Naive thymus-derived CD4-positive, alpha-beta T cell (primary cell): ENCODE measurements at regions of chr7 and their contacts with region 1.

Region 1: DNA sequence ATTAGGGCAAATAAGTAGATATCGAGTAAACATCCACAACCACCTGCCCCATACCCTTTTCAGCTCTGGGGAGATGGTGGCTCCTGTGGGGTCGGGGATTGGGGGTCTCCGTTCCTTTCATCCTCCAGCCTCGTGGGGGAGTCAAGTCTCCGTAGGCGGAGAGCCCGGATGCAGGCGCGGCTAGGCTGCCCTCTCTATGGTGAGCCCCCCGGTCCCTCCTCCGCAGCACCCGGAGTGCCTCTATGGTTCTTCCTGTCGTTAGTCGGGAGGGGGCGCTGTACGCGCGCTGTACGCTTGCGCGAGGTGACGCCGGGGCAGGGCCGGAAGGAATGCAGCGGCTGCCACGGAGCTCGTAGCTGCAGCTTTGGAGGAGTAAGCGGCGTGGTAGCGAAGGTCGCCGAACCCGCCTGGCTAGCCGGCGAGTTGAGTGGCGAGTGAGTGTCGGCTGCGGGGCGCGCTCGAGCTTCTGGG is 14.8 kb upstream of the MMD2 start:
- DNase-seq: peak; percentile 89 to 99 (median 95)
- ATAC-seq: peak; percentile 99
- H3K4me3 ChIP-seq: peak overlapping the region; percentile 68
- H3K4me3 Mint-ChIP-seq: peak overlapping the region; percentile 85 to 100 (median 98)
- H3K27ac ChIP-seq: peak overlapping the region; percentile 78
- H3K27ac Mint-ChIP-seq: peak overlapping the region; percentile 90 to 99 (median 95)
- H3K4me1 ChIP-seq: peaks cover 4 to 9% of the 10 kb centered on the region in 2 donors
- H3K4me1 Mint-ChIP-seq: peaks cover 22 to 44% (median 33%) of the 10 kb centered on the region in 7 donors
- H3K27me3 ChIP-seq: no peaks in the 10 kb centered on the region
- H3K27me3 Mint-ChIP-seq: peaks cover 0 to 2% (median 0%) of the 10 kb centered on the region in 5 donors

Region 2: DNA sequence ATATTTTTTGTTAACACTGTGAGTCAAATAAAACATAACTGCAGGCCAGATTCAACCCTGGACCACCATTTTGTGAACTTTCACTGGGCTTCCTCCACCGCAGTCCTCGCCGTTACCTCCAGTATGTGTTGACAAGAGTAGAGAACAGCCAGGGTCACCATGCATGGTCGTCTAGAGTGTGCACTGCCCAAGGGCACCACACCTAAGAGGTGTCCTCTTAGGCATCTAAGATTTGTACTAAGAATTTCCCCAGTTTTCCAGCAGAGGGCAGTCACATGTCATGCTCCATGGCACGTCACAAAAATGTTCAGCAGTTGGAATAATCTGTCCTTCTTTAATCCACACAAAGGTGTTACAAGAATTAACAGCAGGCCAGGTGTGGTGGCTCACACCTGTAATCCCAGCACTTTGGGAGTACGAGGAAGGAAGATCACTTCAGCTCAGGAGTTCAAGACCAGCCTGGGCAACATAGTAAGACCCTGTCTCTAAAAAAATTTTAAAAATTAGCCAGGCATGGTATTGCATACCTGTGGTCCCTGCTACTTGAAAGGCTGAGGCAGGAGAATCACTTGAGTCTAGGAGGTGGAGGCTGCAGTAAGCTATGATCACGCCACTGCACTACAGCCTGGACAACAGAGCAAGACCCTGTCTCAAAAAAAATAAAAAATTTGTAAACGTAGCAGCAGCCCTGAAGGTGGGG is 362.8 kb before region 1 on chr7:
- CTCF ChIA-PET with region 1: interaction called, 3 read pairs
- POLR2A ChIA-PET with region 1: no interaction called
- intact Hi-C with region 1: loop called in 1 of 2 experiments (anchors 1 kb)
- DNase-seq: peak; percentile 23 to 77 (median 71)
- ATAC-seq: peak; percentile 91
- H3K4me3 ChIP-seq: no peak overlapping the region
- H3K4me3 Mint-ChIP-seq: no peak overlapping the region
- H3K27ac ChIP-seq: no peak overlapping the region
- H3K27ac Mint-ChIP-seq: peak overlapping the region in 3 of 9 donors; percentile 5 to 67 (median 26)
- H3K4me1 ChIP-seq: peaks cover 0 to 12% of the 10 kb centered on the region in 2 donors
- H3K4me1 Mint-ChIP-seq: peaks cover 11 to 28% (median 20%) of the 10 kb centered on the region in 7 donors
- H3K27me3 ChIP-seq: no peaks in the 10 kb centered on the region
- H3K27me3 Mint-ChIP-seq: peaks cover 0 to 3% (median 0%) of the 10 kb centered on the region in 5 donors

Region 3: DNA sequence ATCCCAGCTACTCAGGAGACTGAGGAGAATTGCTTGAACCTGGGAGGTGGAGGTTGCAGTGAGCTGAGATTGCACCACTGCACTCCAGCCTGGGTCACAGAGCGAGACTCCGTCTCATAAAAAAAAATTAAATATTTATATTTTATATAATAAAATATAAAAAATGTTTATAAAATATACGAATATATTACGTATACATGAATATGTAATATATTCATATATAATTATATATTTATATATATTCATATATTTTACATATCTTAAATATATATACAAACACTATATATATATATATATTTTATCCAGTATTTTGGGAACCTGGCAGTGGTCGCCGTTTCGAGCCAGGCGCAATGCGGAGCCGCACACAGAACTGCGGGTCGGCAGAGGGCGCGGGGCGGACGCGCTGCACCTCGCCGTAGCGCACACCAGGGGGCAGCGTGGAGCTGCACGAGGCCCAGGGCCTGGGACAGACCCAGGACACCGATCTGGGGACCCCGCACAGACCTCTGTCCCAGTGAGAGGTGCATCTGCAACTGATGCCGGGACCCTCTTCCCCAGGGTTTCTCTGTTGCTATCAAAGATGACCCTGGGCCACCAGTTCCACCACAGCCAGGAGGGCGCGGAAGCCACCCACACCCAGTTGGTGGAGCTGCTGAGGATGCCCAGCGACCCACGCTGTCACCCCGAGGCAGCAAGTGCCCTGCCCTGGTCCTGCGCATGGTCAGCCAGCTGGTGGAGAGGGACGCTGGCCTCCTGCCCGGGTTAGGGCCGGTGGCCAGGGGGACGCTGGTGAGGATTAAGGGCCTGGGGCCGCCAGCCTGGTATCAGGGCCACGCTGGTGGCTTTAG is 175.7 kb before region 1 on chr7:
- CTCF ChIA-PET with region 1: no interaction called
- POLR2A ChIA-PET with region 1: no interaction called
- intact Hi-C with region 1: loop called in 1 of 2 experiments (anchors 5 kb)
- DNase-seq: peak; percentile 34 to 77 (median 60)
- ATAC-seq: peak; percentile 91
- H3K4me3 ChIP-seq: no peak overlapping the region
- H3K4me3 Mint-ChIP-seq: no peak overlapping the region
- H3K27ac ChIP-seq: no peak overlapping the region
- H3K27ac Mint-ChIP-seq: no peak overlapping the region
- H3K4me1 ChIP-seq: no peaks in the 10 kb centered on the region
- H3K4me1 Mint-ChIP-seq: peaks cover 0 to 10% (median 6%) of the 10 kb centered on the region in 7 donors
- H3K27me3 ChIP-seq: no peaks in the 10 kb centered on the region
- H3K27me3 Mint-ChIP-seq: no peaks in the 10 kb centered on the region

Region 4: DNA sequence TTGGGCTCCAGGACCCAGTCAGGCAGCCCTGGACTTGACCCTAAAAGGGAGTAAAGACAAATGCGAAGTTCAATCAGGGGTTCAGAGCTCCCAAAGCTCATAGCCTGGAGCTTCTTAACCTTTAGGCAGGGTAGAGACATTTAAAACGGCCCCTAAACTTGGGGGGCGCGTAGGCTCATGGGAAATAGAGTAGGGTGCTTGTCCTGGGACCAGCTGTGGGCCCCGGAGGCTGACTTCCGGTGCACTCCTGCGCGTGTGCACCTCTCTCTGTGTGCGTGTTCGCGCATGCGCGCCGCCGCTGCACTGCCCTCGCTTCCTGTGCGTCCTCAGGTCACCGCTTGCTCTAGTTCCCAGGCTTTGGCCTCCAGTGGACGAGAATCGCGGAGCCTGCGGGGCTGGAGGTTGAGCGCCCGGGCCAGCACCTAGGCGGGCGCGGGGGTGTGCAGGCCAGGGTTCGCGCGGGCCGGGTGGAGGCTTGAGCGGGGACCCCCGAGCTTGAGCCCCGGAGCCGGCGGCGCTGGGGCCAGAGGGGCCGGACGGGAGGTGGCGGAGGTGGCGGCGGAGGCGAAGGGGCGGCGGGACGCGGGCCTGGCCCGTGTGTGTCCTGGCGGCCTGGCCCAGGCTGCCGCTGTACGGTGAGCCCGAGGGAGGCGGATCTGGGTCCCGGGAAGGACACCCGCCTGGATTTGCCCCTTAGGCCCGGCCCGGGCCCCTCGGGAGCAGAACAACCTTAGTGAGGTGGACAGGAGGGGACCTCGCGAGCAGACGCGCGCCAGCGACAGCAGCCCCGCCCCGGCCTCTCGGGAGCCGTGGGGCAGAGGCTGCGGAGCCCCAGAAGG is 72.0 kb after region 1 on chr7 and contains the start of gene RBAK:
- CTCF ChIA-PET with region 1: no interaction called
- POLR2A ChIA-PET with region 1: interaction called, 8 read pairs
- intact Hi-C with region 1: loop called (anchors 1 kb)
- DNase-seq: peak; percentile 74 to 91 (median 86)
- ATAC-seq: peak; percentile 100
- H3K4me3 ChIP-seq: peak within 1 kb of the TSS; percentile 76
- H3K4me3 Mint-ChIP-seq: peak within 1 kb of the TSS; percentile 92 to 98 (median 96)
- H3K27ac ChIP-seq: peak within 1 kb of the TSS; percentile 95
- H3K27ac Mint-ChIP-seq: peak within 1 kb of the TSS; percentile 82 to 97 (median 92)
- H3K4me1 ChIP-seq: peaks cover 4 to 7% of the 10 kb centered on the region in 2 donors
- H3K4me1 Mint-ChIP-seq: peaks cover 16 to 57% (median 51%) of the 10 kb centered on the region in 7 donors
- H3K27me3 ChIP-seq: no peaks in the 10 kb centered on the region
- H3K27me3 Mint-ChIP-seq: peaks cover 0 to 2% (median 0%) of the 10 kb centered on the region in 5 donors
- total RNA-seq, gene RBAK: 11.8 to 21.8 (median 17.5) TPM

Region 5: DNA sequence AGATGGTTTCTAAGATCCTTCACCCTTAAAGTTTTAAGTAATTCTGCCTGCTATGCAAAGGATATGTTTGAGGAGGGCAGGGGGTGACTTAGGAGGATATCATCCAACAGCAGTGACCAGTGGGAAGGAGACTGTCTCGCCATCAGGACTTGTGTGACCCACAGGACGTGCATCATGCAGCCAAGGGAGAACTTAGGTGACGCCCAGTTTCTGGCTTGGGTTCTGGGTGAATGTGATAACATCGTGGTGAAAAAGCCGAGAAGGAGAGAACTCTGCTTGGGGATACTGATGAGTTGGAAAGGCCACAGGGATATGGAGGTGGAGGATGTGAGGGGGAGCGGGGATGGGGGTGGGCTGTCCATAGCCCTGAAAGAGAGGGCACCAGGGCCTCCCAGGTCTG is 220.1 kb after region 1 on chr7:
- CTCF ChIA-PET with region 1: no interaction called
- POLR2A ChIA-PET with region 1: no interaction called
- intact Hi-C with region 1: loop called in 1 of 2 experiments (anchors 5 kb)
- DNase-seq: no peak
- ATAC-seq: no peak
- H3K4me3 ChIP-seq: no peak overlapping the region
- H3K4me3 Mint-ChIP-seq: peak overlapping the region in 1 of 10 donors; percentile 42
- H3K27ac ChIP-seq: no peak overlapping the region
- H3K27ac Mint-ChIP-seq: peak overlapping the region in 2 of 9 donors; percentile 14 to 37
- H3K4me1 ChIP-seq: peaks cover 14 to 19% of the 10 kb centered on the region in 2 donors
- H3K4me1 Mint-ChIP-seq: peaks cover 24 to 54% (median 42%) of the 10 kb centered on the region in 7 donors
- H3K27me3 ChIP-seq: no peaks in the 10 kb centered on the region
- H3K27me3 Mint-ChIP-seq: no peaks in the 10 kb centered on the region